Activated CD8-positive, alpha-beta T cell treated with anti-CD3 and anti-CD28 coated beads for 36 hours (primary cell): ENCODE measurements at regions of chr7 and their contacts with region 1.

Region 1: DNA sequence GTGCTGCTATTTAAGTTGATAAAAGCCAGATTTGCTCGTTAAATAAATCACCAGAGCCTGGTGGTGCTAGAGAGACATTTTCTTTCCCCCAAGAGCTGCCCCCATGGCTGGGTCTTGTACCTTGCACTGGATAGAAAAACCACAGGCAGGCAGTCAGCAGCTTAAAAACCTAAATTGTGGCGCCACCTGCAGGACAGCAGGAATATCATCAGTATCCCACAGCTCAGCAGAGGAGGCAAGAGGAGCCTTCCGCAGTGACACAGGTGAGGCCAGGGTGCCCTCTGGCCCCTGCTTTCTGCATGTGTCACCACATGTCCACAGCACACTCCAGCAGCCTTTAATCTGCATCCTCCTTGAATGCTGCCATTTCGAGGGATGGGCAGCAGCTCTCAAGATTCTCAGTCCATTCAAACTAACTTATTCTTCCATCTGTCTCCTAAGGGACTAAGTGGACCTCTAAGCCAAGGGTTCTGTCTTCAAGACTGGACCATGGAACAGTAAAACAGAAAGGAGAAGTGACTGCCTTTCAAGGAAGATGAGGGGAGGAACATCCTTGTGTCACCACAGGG is 4.5 kb upstream of the PLXNA4 start:
- DNase-seq: peak; percentile 85
- ATAC-seq: peak; percentile 81
- H3K4me3 Mint-ChIP-seq: no peak overlapping the region
- H3K27ac Mint-ChIP-seq: no peak overlapping the region
- H3K4me1 Mint-ChIP-seq: no peaks in the 10 kb centered on the region
- H3K27me3 Mint-ChIP-seq: peaks cover 21% of the 10 kb centered on the region
- CTCF ChIP-seq: peak; percentile 87

Region 2: GRCh38 chr7:132318352-132319318 is 262.2 kb before region 1 on chr7:
- CTCF ChIA-PET with region 1: interaction called, 110 read pairs
- POLR2A ChIA-PET with region 1: no interaction called
- intact Hi-C with region 1: loop called (anchors 1 kb)
- DNase-seq: peak; percentile 85
- ATAC-seq: peak; percentile 98
- H3K4me3 Mint-ChIP-seq: no peak overlapping the region
- H3K27ac Mint-ChIP-seq: no peak overlapping the region
- H3K4me1 Mint-ChIP-seq: peaks cover 7% of the 10 kb centered on the region
- H3K27me3 Mint-ChIP-seq: peaks cover 28% of the 10 kb centered on the region
- CTCF ChIP-seq: peak; percentile 85

Region 3: DNA sequence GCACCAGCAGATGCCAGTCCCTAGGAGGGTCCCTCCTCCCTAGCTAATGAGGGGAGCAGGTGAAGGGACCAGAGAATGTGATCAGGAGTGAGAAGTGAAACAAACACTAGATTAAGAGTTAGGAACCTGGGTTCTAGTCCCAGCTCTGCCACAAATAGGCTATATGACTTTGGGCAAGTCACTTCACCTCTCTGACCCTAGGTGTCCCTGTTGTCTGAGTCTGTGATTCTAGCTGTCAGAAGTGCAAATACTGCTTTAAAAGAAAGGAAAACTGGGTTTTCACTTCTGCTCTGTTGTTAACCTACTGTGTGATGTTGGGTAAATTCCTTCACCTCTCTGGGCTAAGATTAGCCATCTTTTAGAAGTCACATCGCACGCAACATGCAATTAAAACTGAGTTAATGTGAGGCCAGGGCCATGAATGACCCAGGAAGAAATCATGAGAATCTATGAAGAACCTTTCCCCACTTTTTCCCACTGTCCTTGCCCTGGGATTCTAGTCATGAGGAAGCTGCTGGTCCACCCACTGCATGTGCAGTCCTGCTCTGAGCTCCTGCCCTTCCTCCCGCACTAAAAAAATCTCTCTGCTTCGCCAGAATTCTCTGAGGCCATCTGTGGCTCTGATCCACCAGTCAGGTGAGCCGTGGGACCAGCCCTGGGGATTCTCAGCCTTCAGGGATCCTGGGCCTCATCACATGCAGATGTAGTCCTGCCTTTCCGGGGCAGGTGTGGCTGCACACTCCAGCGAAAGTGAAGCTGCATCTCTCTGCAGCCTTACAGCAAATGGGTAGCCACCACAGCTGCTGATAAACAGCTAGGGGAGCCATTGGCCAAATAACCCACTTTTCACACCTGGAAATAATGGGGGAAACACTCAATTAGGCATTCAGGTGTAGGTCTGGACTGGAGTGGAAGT is 186.3 kb before region 1 on chr7:
- CTCF ChIA-PET with region 1: interaction called, 117 read pairs
- POLR2A ChIA-PET with region 1: no interaction called
- intact Hi-C with region 1: loop called (anchors 2 kb)
- DNase-seq: peak; percentile 51
- ATAC-seq: peak; percentile 74
- H3K4me3 Mint-ChIP-seq: no peak overlapping the region
- H3K27ac Mint-ChIP-seq: no peak overlapping the region
- H3K4me1 Mint-ChIP-seq: no peaks in the 10 kb centered on the region
- H3K27me3 Mint-ChIP-seq: no peaks in the 10 kb centered on the region
- CTCF ChIP-seq: peak; percentile 67

Region 4: DNA sequence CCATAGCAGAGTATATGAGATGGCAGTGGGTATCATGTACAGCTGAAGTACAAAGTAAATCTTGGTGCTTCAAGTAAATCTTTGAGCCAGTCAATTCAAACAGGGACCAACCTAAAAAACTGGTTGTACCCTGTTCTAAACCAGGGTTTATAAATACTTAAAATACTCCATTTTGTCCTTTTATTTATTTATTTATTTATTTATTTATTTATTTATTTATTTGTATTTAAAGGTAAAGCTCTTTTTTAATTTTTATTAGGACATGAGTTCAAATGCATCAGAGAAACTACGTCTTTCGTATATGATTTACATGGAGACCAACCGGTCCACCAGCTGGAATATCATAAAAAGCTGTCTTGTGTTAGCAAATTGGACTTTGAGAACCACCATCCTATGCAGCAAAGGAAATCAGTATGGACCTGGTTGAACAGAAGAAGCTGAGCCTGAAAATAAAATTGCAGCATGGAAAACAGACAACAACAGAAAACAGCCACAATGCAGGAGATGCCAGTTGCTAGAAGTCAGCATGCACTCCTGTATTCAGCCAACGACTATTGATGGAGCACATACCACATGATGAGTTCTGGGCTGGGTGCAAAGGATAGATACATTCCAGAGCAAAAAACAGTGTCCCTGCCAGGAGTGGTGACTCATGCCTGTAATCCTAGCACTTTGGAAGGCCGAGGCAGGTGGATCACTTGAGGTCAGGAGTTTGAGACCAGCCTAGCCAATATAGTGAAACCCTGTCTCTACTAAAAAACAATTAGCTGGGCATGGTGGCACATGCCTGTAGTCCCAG is 64.6 kb before region 1 on chr7:
- CTCF ChIA-PET with region 1: interaction called, 11 read pairs
- POLR2A ChIA-PET with region 1: no interaction called
- intact Hi-C with region 1: no loop called
- DNase-seq: no peak
- ATAC-seq: no peak
- H3K4me3 Mint-ChIP-seq: no peak overlapping the region
- H3K27ac Mint-ChIP-seq: no peak overlapping the region
- H3K4me1 Mint-ChIP-seq: no peaks in the 10 kb centered on the region
- H3K27me3 Mint-ChIP-seq: no peaks in the 10 kb centered on the region
- CTCF ChIP-seq: no peak

Region 5: GRCh38 chr7:132557489-132558044 is 23.2 kb before region 1 on chr7:
- CTCF ChIA-PET with region 1: interaction called, 12 read pairs
- POLR2A ChIA-PET with region 1: interaction called, 4 read pairs
- intact Hi-C with region 1: no loop called
- DNase-seq: no peak
- ATAC-seq: no peak
- H3K4me3 Mint-ChIP-seq: no peak overlapping the region
- H3K27ac Mint-ChIP-seq: no peak overlapping the region
- H3K4me1 Mint-ChIP-seq: peaks cover 4% of the 10 kb centered on the region
- H3K27me3 Mint-ChIP-seq: no peaks in the 10 kb centered on the region
- CTCF ChIP-seq: no peak

Region 6: GRCh38 chr7:132854238-132854637 is 273.4 kb after region 1 on chr7:
- CTCF ChIA-PET with region 1: no interaction called
- POLR2A ChIA-PET with region 1: no interaction called
- intact Hi-C with region 1: no loop called
- DNase-seq: no peak
- ATAC-seq: no peak
- H3K4me3 Mint-ChIP-seq: no peak overlapping the region
- H3K27ac Mint-ChIP-seq: no peak overlapping the region
- H3K4me1 Mint-ChIP-seq: peaks cover 13% of the 10 kb centered on the region
- H3K27me3 Mint-ChIP-seq: no peaks in the 10 kb centered on the region
- CTCF ChIP-seq: no peak